Body of pancreas (tissue), 4 donors: ENCODE measurements at regions of chr13 and their contacts with region 1.

Region 1: DNA sequence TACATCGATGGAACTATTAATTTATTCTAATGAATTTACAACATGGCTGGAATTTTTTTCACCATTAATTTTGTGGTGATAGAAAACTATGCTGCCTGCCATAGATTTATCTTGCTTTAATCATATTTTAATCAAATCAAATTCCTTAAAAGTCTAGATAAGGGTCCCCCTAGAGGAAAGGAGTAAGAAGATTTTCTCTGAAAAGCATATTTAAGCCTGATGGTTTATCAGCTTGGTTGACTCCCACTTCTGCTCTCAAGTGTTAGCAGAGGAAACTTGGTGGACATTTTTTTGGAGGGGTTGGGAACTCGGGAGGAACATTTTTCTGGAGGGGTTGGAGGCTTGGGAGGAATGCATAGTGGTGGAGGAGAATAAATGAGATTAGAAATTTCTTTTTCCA is 253.3 kb downstream of the KCNRG start:
- DNase-seq: no peak
- ATAC-seq: no peak
- H3K4me3 ChIP-seq: no peak overlapping the region
- H3K27ac ChIP-seq: no peak overlapping the region
- H3K4me1 ChIP-seq: peaks cover 6% of the 10 kb centered on the region
- H3K27me3 ChIP-seq: no peaks in the 10 kb centered on the region
- CTCF ChIP-seq: no peak
- POLR2A ChIP-seq: no peak

Region 2: DNA sequence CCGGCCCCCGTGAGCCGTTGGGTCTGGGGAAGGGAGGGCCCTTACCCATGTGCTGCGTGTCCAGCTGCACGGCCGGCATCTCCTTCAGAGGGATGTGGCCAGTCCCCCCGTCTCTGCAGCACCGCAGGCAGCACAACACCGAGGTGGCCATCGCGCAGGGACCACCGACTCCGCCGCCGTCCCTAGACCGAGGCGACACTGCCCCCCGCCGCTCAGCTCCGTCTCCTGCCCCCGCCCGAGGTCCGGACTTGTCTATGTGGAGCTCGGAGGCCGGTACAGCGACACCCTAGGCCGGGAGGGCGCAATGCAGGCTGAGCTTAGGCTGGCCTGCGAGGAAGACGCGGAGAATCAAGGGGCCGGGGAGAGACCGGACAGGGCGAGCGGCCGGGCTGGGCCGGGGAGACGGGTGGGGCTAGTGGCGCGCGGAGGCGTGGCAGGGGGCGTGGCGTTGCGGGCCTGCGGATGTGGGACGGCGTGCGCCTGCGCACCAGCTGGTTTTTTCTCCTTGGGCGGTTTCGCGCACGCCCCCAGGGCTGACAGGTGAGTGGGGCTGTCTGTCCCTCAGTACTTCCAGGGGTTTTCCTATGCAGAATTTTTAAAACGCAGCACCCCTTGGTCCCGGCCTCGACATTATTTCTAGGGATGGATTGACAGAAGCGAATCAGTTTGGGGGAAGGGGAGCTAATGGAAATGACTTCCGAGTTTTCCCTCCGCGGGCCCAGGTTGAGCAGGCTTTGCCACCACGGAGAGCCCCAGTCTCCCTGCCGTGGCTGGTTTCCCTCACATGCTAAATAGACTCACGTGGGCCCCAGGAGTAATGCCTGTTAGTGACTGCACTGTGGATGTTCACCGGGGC is 332.2 kb before region 1 on chr13 and contains the start of gene SPRYD7:
- intact Hi-C with region 1: no loop called
- DNase-seq: peak; percentile 98 to 99 (median 99)
- ATAC-seq: peak; percentile 97
- H3K4me3 ChIP-seq: peak within 1 kb of the TSS; percentile 79 to 81
- H3K27ac ChIP-seq: peak within 1 kb of the TSS; percentile 77 to 89 (median 85)
- H3K4me1 ChIP-seq: peaks cover 35% of the 10 kb centered on the region
- H3K27me3 ChIP-seq: no peaks in the 10 kb centered on the region
- CTCF ChIP-seq: peak; percentile 92 to 98 (median 97)
- POLR2A ChIP-seq: peak; percentile 56 to 83 (median 78)
- total RNA-seq, gene SPRYD7: 4.9 to 5.9 TPM

Region 3: GRCh38 chr13:50130123-50130946 is 138.2 kb before region 1 on chr13:
- intact Hi-C with region 1: loop called (anchors 10 kb)
- DNase-seq: peak in 2 of 4 donors; percentile 13 to 23
- ATAC-seq: no peak
- H3K4me3 ChIP-seq: no peak overlapping the region
- H3K27ac ChIP-seq: no peak overlapping the region
- H3K4me1 ChIP-seq: peaks cover 43% of the 10 kb centered on the region
- H3K27me3 ChIP-seq: peaks cover 0 to 57% of the 10 kb centered on the region in 2 donors
- CTCF ChIP-seq: no peak
- POLR2A ChIP-seq: peak in 1 of 3 donors; percentile 17

Region 4: DNA sequence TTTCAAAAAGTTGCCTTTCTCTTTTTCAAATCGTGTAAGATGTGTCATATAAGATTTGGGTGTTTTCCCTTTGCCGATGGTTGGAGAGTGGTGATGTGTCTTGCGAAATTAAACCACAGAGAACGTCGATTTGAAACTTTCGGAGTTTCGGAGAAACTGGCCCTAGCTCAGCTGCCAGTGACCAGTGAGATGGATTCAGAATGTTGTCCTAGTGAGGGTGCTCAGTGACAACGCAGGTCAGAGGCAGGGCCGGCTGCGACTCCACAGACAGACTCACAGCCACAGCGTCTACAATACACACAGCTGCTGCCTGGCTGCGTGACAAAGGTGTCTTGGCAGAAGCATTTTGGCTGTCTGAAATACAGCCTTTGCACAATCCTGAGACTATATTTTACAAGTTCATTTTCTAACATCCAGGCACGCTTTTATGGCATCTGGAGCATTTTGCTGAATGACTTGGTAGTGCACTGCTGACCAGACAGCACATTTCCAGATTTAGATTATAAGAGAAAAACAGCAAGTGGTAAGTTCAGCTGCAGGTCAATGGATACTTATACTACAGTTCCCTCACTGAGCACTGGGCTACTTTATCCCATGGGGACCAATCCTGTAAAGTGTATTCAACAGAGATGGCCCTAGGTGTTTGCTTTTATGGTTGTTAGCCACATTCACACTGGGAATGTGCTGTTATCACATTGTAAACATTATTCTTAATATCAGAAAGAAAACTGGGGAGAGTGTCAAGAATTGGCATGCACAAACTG is 45.7 kb before region 1 on chr13:
- intact Hi-C with region 1: no loop called
- DNase-seq: peak; percentile 48 to 74 (median 63)
- ATAC-seq: peak; percentile 74
- H3K4me3 ChIP-seq: no peak overlapping the region
- H3K27ac ChIP-seq: peak overlapping the region in 3 of 4 donors; percentile 12 to 52 (median 24)
- H3K4me1 ChIP-seq: peaks cover 9% of the 10 kb centered on the region
- H3K27me3 ChIP-seq: no peaks in the 10 kb centered on the region
- CTCF ChIP-seq: no peak
- POLR2A ChIP-seq: no peak